ENCODE measurements at regions of chr7 and their contacts with region 1.

Region 1: DNA sequence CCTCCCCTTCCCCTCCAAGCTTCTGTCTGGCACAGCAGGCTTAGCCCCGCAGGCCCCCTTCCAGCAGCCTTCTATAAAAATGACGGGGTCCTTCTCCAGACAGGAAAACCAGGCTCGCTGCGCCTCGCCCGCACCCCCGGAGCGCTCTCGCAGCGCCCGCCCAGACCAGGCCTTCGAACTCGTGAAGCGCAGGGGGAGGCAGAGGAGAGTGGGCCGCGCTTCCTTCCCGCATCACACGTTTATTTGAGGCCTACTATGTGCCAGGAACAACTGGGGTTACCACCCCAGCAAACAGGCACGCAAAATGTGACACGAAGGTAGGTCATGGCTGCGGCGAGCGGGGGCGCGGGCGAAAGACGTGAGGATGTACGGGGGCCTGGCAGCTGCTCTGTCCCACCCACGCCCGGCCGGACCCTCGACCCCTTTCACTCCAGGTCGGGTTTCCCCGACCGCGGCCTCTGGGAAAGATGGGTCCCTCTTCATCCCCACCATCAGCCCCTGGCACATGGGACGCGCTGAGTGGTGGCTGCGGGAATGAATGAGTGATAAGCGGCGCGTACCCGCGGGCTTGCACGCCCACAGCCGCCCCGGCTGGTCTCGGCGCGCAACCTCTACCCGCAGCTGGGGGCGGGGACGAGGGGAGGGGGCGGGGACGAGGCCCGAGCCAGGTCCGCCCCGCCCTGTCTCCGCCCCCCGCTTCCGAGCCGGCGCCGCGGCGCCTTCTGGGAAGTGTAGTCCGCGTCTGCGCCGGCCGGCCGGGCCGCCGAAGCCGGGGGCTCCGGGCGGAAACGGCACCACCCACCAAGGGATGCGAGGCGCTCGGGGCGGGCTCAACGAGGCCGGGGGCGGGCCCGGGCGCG is 59.1 kb downstream of the ZNF467 start:
- DNase-seq: peak; percentile 91 to 95 (median 94)
- H3K4me3 ChIP-seq: peak overlapping the region; percentile 56
- H3K27ac ChIP-seq: peak overlapping the region in 1 of 2 donors; percentile 70
- H3K4me1 ChIP-seq: peaks cover 6% of the 10 kb centered on the region
- H3K27me3 ChIP-seq: no peaks in the 10 kb centered on the region
- CTCF ChIP-seq: no peak
- EP300 ChIP-seq: no peak
- POLR2A ChIP-seq: no peak

Region 2: DNA sequence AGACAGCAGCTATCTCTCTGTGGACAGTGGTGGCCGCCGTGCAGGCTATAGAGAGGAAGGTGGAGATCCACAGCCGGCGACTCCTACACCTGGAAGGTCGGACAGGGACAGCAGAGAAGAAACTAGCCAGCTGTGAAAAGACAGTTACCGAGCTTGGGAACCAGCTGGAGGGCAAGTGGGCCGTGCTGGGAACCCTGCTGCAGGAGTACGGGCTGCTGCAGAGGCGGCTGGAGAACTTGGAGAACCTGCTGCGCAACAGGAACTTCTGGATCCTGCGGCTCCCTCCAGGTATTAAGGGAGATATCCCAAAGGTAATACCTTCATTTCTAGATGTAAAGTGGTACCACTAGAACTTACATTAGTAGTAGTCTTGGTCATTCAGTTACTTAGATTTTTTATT is 560.2 kb before region 1 on chr7:
- intact Hi-C with region 1: loop called in 1 of 4 experiments (anchors 10 kb)
- DNase-seq: no peak
- H3K4me3 ChIP-seq: no peak overlapping the region
- H3K27ac ChIP-seq: no peak overlapping the region
- H3K4me1 ChIP-seq: peaks cover 2% of the 10 kb centered on the region
- H3K27me3 ChIP-seq: no peaks in the 10 kb centered on the region
- CTCF ChIP-seq: no peak
- EP300 ChIP-seq: no peak
- POLR2A ChIP-seq: no peak

Region 3: GRCh38 chr7:149615690-149616270 is 98.5 kb before region 1 on chr7:
- intact Hi-C with region 1: no loop called
- DNase-seq: no peak
- H3K4me3 ChIP-seq: no peak overlapping the region
- H3K27ac ChIP-seq: no peak overlapping the region
- H3K4me1 ChIP-seq: no peaks in the 10 kb centered on the region
- H3K27me3 ChIP-seq: no peaks in the 10 kb centered on the region
- CTCF ChIP-seq: no peak
- EP300 ChIP-seq: no peak
- POLR2A ChIP-seq: no peak

Region 4: GRCh38 chr7:149883452-149883861 is 169.2 kb after region 1 on chr7:
- intact Hi-C with region 1: no loop called
- DNase-seq: peak in 2 of 5 donors; percentile 55 to 69
- H3K4me3 ChIP-seq: no peak overlapping the region
- H3K27ac ChIP-seq: no peak overlapping the region
- H3K4me1 ChIP-seq: peaks cover 4% of the 10 kb centered on the region
- H3K27me3 ChIP-seq: no peaks in the 10 kb centered on the region
- CTCF ChIP-seq: peak; percentile 11 to 54 (median 24)
- EP300 ChIP-seq: no peak
- POLR2A ChIP-seq: no peak

Region 5: DNA sequence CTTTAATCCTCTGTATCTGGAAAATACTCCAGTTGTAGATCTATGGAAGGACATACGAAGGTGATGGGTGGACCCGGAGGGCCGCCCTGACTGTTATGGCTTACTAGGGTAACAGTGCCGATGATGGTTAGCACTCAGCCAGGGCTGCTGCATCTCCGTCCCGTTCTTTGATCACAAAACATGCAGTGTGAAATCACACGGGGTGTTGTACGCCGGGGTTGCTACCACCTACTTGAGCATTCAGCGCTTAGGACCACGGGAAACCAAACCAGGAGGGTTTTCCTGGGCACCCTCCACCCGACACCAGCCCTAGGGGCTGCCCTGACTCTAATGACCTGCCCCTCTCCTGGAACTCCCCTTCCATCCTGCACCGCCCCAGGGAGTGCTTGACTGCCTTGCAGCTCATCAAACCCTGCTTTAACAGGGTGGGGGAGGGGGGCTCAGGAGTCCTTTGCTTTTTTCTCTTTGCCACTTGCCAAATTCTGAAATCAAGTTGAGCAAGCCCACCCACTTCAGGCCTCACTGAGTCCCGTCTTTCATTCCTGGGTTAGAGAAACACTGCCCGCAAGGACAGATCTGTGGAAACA is 685.2 kb after region 1 on chr7:
- intact Hi-C with region 1: loop called in 1 of 4 experiments (anchors 5 kb)
- DNase-seq: peak in 1 of 5 donors; percentile 13
- H3K4me3 ChIP-seq: no peak overlapping the region
- H3K27ac ChIP-seq: no peak overlapping the region
- H3K4me1 ChIP-seq: peaks cover 9% of the 10 kb centered on the region
- H3K27me3 ChIP-seq: no peaks in the 10 kb centered on the region
- CTCF ChIP-seq: no peak
- EP300 ChIP-seq: no peak
- POLR2A ChIP-seq: no peak

Measured in ovary (tissue), 10 donors.